Caki2 (cell line): ENCODE measurements at regions of chr1 and their contacts with region 1.

Region 1: DNA sequence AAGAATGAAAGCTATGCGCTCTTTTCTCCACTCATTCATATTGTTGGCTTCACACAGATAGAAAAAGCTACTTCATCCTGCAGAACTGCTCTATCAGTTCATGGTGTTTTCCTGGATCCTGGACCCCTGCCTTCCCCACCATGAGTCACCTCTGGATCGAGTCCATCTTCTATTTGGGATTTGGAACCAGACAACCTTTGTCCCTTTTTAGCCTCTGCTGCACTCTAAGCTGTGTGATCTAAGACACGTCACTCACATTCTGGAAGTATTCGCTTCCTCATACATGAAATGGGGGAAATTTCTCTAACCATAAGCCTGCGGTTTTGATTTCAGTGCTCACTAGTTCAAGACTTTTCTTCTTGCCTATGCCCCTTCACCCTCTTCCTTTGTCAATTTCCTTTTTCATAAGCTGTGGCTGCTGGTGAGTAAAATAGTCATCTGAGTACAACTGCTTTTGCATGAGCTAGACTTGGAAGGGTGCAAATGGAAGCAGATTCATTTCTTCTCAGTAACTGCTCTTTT is 14.1 kb upstream of the DEGS1 start:
- DNase-seq: no peak

Region 2: DNA sequence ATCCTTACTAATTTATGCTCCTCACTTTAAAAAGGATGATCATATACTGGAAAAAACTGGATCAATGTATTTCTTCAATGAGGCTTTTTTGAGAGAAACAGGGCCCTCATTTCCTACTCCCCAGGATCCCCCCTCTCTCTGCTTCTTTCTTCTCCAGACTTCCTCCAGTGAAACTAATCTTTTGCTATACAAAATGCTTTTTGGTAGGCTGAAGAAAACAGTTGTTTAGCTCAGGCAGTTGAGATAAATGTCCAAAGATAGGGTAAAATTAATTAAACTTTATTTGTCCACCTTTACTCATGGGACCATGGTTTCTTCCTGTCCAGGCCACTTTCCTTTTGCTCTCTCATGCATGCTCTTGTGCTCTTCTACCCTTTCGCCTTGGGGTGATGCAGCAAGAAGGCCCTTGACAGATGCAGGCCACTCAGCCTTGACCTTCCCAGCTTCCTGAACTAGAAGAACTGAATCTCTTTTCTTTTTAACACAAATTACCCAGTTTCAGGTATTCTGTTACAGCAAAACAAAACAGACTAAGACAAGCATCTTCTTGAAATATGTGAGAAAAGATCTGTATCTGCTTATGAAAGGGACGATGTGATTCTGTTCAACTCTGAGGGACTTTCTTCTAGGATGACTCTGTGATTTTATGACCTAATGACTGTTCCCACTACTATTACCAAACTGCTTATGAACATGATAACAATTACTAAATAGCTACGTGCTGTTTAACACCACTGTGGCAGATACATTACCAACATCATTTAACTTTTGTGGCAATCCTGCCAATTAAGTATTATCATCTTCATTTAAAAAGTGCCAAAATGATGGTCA is 97.4 kb after region 1 on chr1:
- in situ Hi-C with region 1: loop called (anchors 25 kb)
- DNase-seq: no peak

Region 3: GRCh38 chr1:224368409-224368808 is 199.5 kb after region 1 on chr1:
- in situ Hi-C with region 1: no loop called
- DNase-seq: no peak